GM12878 (cell line): ENCODE measurements at regions of chr5 and their contacts with region 1.

Region 1: GRCh38 chr5:172764849-172765765 is 5.9 kb downstream of the DUSP1 start:
- DNase-seq: peak; percentile 83
- ATAC-seq: peak; percentile 93
- H3K4me3 ChIP-seq: peak overlapping the region; percentile 69; the same call in 1 of the 2 replicates
- H3K27ac ChIP-seq: peak overlapping the region; percentile 65
- H3K4me1 ChIP-seq: peaks cover 19% of the 10 kb centered on the region
- H3K27me3 ChIP-seq: no peaks in the 10 kb centered on the region
- CTCF ChIP-seq: no peak
- EP300 ChIP-seq: peak in 1 of 2 experiments; percentile 82; a peak in 2 of 4 replicates
- POLR2A ChIP-seq: peak; percentile 37; the same call in 1 of the 2 replicates
- RAD21 ChIP-seq: no peak

Region 2: GRCh38 chr5:172910828-172911627 is 145.9 kb after region 1 on chr5:
- CTCF ChIA-PET with region 1: interaction called, 24 read pairs
- POLR2A ChIA-PET with region 1: no interaction called
- RAD21 ChIA-PET with region 1: interaction called, 17 read pairs
- SMC1A ChIA-PET with region 1: interaction called, 10 read pairs
- in situ Hi-C with region 1: no loop called
- intact Hi-C with region 1: loop called (anchors 5 kb)
- DNase-seq: peak; percentile 61
- ATAC-seq: peak; percentile 91
- H3K4me3 ChIP-seq: no peak overlapping the region
- H3K27ac ChIP-seq: peak overlapping the region; percentile 83
- H3K4me1 ChIP-seq: peaks cover 23% of the 10 kb centered on the region
- H3K27me3 ChIP-seq: no peaks in the 10 kb centered on the region
- CTCF ChIP-seq: peak; percentile 38 to 61 (median 41); a peak in 4 of 6 replicates
- EP300 ChIP-seq: no peak
- POLR2A ChIP-seq: no peak
- RAD21 ChIP-seq: peak; percentile 48; the same call in 1 of the 2 replicates

Region 3: DNA sequence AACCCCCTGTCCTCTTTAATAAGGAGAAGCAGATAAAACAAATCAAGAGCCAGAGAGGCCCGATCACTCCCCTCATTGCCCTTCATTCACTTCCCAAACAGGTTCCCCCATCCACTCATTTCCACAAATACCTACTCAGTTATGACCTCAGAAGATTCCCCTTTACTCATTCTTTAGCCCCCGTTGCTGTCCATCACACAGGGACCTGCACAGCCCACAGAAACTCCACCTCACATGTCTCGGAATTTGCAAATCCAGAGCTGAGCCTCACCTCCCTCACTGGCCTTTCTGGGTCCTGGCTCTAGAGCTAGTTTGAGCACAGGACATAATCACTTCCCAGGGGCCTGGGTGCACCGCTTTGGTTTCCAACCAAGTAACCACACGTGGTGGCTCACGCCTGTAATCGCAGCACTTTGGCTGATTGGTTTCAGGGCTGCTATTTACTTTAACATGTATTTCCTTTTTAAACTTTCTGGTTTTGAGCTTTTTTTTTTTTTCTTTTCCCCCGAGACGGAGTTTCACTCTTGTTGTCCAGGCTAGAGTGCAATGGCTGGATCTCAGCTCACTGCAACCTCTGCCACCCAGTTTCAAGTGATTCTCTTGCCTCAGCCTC is 236.2 kb after region 1 on chr5:
- CTCF ChIA-PET with region 1: no interaction called
- POLR2A ChIA-PET with region 1: no interaction called
- RAD21 ChIA-PET with region 1: no interaction called
- SMC1A ChIA-PET with region 1: no interaction called
- in situ Hi-C with region 1: no loop called
- intact Hi-C with region 1: no loop called
- DNase-seq: peak; percentile 51
- ATAC-seq: peak; percentile 93
- H3K4me3 ChIP-seq: peak overlapping the region; percentile 28; the same call in 1 of the 2 replicates
- H3K27ac ChIP-seq: peak overlapping the region; percentile 20; the same call in 1 of the 2 replicates
- H3K4me1 ChIP-seq: peaks cover 19% of the 10 kb centered on the region
- H3K27me3 ChIP-seq: no peaks in the 10 kb centered on the region
- CTCF ChIP-seq: no peak
- EP300 ChIP-seq: no peak
- POLR2A ChIP-seq: no peak
- RAD21 ChIP-seq: no peak